Lower leg skin (tissue), 4 donors: ENCODE measurements at regions of chr1 and their contacts with region 1.

Region 1: DNA sequence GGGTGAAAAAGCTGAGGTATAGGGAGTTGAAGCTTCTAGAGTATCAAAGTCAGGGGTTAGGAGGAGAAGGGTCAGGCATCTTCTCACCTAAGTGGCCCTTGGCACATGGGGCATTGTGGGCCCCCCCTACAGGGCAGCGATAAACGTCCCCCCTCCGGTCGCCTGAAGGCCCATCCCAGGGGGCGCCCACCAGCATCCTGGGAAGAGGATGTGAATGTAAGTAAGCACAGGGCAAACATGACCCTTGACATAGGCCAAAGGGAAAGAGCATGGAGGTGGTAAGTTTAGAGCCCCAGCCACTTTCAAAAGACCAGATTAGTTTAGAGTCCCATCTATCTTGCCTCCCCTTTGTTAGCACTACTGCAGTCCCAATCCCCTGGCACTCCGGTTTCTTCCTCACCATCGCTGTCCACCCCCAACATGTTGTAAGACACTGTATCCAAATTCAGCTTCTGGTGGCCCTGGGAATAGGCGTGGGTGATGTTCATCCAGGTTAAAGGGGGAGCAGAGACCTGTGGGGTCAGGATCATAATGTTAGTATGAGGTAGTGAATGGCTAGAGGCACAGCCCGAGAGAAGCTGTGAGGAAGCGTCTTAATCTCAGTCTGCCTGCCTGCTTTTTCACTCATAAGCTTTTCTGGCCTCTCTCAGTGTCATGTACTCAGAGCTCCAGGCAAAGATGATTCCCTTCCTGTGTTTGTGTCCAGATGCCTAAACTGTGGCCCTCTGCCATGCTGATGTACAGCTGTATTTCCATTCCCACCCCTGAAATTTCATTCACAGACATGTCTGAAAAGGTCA is 2.7 kb downstream of the ITGA10 start:
- DNase-seq: no peak
- H3K4me3 ChIP-seq: no peak overlapping the region
- CTCF ChIP-seq: no peak
- POLR2A ChIP-seq: no peak

Region 2: DNA sequence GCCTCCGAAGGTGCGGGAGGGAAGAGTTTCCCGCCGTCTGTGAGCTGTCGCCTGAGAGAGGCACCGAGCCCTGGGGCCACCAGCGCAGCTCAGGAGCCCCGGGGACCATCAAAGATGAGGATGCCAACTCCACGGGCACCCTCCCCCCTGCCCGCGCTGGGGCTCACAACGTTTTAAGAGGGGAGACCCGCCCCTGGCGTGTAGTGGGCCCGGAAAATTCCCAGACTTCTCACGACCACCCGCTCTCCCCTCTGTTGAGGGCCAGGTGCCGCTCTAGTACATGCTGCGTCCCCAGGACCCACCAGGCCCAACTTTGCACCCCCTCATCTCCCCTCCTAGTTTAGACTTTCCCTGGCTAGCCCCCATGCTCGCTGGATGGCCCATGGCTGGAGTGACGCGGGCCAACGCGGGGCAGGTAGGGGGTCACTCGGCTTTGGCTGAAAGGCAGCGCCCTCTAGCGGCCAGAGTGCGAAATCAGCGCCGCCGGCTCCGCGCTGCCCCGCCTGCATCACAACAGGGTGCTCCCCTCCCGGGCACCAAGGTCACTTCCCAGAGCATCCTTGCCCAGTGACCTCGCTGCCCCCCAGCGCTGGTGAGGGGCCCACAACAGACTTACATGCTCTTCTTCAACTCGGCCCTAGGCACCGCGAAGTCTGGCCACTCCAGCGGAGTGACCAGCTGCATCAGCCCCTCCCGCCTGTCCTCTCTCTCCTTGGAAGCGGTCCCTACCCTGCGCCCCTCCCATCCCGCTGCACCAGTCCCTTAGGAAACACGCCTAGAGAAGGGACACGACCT is 186.1 kb before region 1 on chr1:
- intact Hi-C with region 1: no loop called
- DNase-seq: peak; percentile 47 to 94
- H3K4me3 ChIP-seq: no peak overlapping the region
- CTCF ChIP-seq: peak in 1 of 3 donors; percentile 64
- POLR2A ChIP-seq: no peak

Region 3: GRCh38 chr1:145823565-145824498 is 83.3 kb before region 1 on chr1 and contains the starts of genes POLR3C and RNF115:
- intact Hi-C with region 1: no loop called
- DNase-seq: peak; percentile 88 to 98
- H3K4me3 ChIP-seq: peak within 1 kb of the TSS; percentile 73
- CTCF ChIP-seq: no peak
- POLR2A ChIP-seq: peak in 1 of 2 donors; percentile 54
- total RNA-seq, gene POLR3C: 25.1 to 31.3 (median 27.0) TPM
- total RNA-seq, gene RNF115: 7.0 to 12.8 (median 9.3) TPM

Region 4: GRCh38 chr1:145845514-145846161 is 61.5 kb before region 1 on chr1 and contains the start of gene NUDT17:
- intact Hi-C with region 1: loop called (anchors 5 kb)
- DNase-seq: peak; percentile 67 to 95
- H3K4me3 ChIP-seq: peak within 1 kb of the TSS; percentile 39
- CTCF ChIP-seq: peak in 1 of 3 donors; percentile 82
- POLR2A ChIP-seq: no peak
- total RNA-seq, gene NUDT17: 0.25 to 5.0 (median 2.5) TPM

Region 5: GRCh38 chr1:145918144-145918992 is 11.2 kb after region 1 on chr1 and contains the start of gene PEX11B:
- intact Hi-C with region 1: no loop called
- DNase-seq: peak; percentile 90 to 98
- H3K4me3 ChIP-seq: peak within 1 kb of the TSS; percentile 52
- CTCF ChIP-seq: no peak
- POLR2A ChIP-seq: peak in 1 of 2 donors; percentile 34
- total RNA-seq, gene PEX11B: 27.0 to 47.1 (median 30.2) TPM